ENCODE measurements at regions of chr19 and their contacts with region 1.

Region 1: GRCh38 chr19:45478454-45479238 is 10.8 kb downstream of the FOSB start:
- DNase-seq: peak; percentile 88
- ATAC-seq: peak; percentile 94
- H3K4me3 ChIP-seq: peak overlapping the region; percentile 72
- H3K27ac ChIP-seq: peak overlapping the region; percentile 98
- H3K4me1 ChIP-seq: peaks cover 5% of the 10 kb centered on the region
- H3K27me3 ChIP-seq: no peaks in the 10 kb centered on the region
- CTCF ChIP-seq: peak; percentile 94 to 98 (median 96)
- EP300 ChIP-seq: no peak
- POLR2A ChIP-seq: peak; percentile 74
- RAD21 ChIP-seq: peak; percentile 89

Region 2: DNA sequence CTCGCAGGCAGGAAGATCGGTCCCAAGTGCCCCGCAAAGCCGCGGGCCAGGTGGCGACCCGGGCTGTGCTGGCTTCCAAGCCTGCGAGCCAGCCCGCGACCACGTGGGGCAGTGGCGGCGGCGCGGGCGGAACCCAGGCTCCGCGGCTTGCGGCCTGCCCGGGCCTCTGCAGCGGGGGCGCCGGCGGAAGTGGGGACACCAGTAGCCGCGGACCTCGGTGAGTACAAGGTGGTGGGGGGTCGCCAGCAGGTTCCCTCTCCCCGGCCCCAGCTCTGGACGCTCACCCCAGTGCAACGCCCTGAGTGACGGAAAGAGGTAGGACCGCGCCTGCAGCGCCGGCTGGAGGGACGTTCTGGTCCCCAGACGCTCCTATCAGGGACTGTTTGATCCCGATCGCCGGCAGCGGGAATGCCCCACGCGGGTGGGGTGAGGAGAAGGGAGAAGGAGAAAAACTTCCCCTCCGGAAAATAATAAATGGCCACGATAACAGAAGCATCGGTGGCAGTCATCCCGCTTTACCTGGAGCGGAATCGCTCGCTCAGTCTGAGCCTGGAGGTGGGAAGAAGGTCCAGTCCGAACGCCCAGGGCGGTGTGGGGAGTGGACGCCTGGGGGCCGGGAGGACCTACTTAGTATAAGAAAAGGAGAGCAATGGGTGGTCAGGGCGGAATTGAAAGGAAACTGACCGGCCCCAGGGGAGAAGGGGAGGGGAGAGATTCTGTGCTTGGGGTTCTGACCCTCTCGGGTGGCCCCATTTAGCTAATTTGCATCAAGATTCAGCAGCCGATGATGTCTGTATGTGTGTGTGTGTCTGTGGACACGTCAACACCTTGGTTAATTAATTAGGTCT is 399.4 kb before region 1 on chr19 and contains the start of gene GEMIN7:
- CTCF ChIA-PET with region 1: no interaction called
- POLR2A ChIA-PET with region 1: no interaction called
- RAD21 ChIA-PET with region 1: no interaction called
- SMC1A ChIA-PET with region 1: no interaction called
- in situ Hi-C with region 1: no loop called
- intact Hi-C with region 1: loop called (anchors 10 kb)
- DNase-seq: peak; percentile 64
- ATAC-seq: peak; percentile 56
- H3K4me3 ChIP-seq: peak within 1 kb of the TSS; percentile 89
- H3K27ac ChIP-seq: peak within 1 kb of the TSS; percentile 95
- H3K4me1 ChIP-seq: peaks cover 22% of the 10 kb centered on the region
- H3K27me3 ChIP-seq: no peaks in the 10 kb centered on the region
- CTCF ChIP-seq: peak in 2 of 3 experiments; percentile 9 to 11; a peak in 1 of 6 replicates
- EP300 ChIP-seq: peak; percentile 65 to 80; a peak in 2 of 4 replicates
- POLR2A ChIP-seq: peak; percentile 83
- RAD21 ChIP-seq: no peak
- polyA plus RNA-seq, gene GEMIN7: 51.6 to 55.3 TPM

Region 3: DNA sequence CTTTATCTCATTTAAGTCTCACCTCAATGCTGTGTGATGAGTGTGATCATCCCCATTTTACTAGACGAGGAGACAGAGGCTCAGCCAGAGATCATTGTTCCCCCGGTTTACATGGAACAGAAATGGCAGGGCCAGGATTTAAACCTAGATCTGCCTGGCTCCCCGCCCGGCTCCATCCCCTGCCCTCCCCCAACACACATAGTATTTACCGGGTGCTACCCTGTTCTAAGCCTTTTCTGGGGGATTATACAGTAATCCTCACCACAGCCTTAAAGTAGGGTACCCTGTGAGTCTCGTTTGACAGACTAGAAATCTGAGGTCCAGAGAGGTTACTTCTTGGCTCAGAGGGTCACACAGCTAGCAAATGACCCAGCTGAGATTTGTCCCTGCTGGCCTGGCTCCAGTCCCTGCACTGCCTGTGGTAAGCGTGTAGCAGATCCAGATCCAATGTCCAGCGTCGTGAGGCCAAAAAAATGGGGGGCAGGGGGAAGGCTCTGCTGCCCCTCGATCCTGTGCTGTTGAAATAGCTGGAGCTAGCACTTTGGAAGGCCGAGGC is 141.9 kb before region 1 on chr19:
- CTCF ChIA-PET with region 1: no interaction called
- POLR2A ChIA-PET with region 1: interaction called, 3 read pairs
- RAD21 ChIA-PET with region 1: no interaction called
- SMC1A ChIA-PET with region 1: no interaction called
- in situ Hi-C with region 1: no loop called
- intact Hi-C with region 1: loop called (anchors 2 kb)
- DNase-seq: no peak
- ATAC-seq: no peak
- H3K4me3 ChIP-seq: no peak overlapping the region
- H3K27ac ChIP-seq: no peak overlapping the region
- H3K4me1 ChIP-seq: peaks cover 3% of the 10 kb centered on the region; the same call in 1 of the 2 replicates
- H3K27me3 ChIP-seq: 0 out of 4 replicates have a peak, but pooled peaks cover 0 to 1% of the 10 kb centered on the region in 2 experiments
- CTCF ChIP-seq: no peak
- EP300 ChIP-seq: no peak
- POLR2A ChIP-seq: no peak
- RAD21 ChIP-seq: no peak

Region 4: DNA sequence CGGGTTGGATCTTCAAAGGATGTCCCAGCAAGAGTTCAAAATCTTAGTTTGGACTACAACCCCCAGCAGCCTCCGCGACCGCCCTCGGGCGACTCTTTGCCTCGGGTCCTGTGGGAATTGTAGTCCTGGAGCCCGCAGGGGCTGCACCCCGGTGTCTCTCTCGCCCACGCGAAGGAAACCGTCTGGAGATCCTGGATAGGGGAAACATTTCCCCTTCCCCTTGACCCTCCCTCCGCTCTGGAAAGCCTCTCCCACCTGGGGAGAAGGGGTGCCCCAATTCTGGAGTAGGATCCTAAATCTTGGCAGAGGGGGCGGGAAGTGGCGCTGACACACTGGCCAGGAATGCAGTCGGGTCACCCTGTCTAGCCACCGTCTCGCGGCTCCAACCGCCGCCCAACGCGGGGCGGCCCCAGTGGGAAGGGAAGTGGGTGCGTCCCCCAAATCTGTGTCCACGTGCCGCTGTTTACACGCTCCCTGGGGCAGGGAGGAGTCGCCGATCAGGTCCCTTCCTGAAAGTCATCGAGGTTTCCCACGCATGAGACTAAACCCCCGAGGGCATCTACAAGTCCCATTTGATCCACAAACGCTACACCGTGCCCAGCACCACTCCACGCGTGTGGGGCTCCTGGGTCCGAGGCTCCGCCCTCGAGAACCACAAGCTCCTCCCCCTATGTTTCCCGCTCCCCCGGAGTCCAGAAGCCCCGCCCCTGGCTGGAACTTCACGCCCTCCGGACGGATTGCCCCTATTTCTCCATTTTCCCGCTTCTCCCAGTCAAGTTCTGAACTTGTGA is 73.0 kb before region 1 on chr19:
- CTCF ChIA-PET with region 1: interaction called, 93 read pairs
- POLR2A ChIA-PET with region 1: interaction called, 3 read pairs
- RAD21 ChIA-PET with region 1: interaction called, 48 read pairs
- SMC1A ChIA-PET with region 1: interaction called, 55 read pairs
- in situ Hi-C with region 1: no loop called
- intact Hi-C with region 1: loop called (anchors 1 kb)
- DNase-seq: peak; percentile 30
- ATAC-seq: peak; percentile 77
- H3K4me3 ChIP-seq: peak overlapping the region; percentile 98
- H3K27ac ChIP-seq: peak overlapping the region; percentile 89
- H3K4me1 ChIP-seq: peaks cover 4% of the 10 kb centered on the region
- H3K27me3 ChIP-seq: no peaks in the 10 kb centered on the region; a peak in 1 of 4 replicates
- CTCF ChIP-seq: no peak
- EP300 ChIP-seq: no peak
- POLR2A ChIP-seq: peak; percentile 45; the same call in 1 of the 2 replicates
- RAD21 ChIP-seq: no peak

Region 5: DNA sequence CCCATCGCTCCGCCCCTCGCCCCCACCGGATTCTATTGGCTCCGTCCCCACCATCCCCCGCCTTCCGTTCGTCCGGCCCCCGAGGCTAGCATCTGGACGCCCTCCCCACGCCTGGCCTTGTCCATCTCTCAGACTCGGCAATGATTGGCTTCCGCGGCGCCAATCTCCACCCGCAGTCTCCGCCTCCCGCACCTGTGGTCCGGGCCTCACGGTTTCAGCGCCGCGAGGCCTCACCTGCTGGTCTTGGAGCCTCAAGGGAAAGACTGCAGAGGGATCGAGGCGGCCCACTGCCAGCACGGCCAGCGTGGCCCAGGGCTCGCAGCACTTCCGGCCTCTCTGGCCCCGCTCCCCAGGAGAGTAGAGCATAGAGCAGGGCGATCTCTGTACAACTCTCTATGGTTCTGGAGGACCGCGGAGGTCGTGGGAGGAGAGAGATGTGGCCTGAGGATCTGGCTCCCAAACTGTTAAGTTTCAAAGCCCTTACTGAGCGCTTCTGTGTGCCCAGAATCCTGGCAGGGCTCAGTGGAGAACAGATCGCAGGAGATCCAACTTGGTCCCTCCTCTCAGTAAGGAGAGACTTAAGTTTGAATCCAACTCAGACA is 55.0 kb before region 1 on chr19 and contains the start of gene ERCC1:
- CTCF ChIA-PET with region 1: interaction called, 103 read pairs
- POLR2A ChIA-PET with region 1: interaction called, 8 read pairs
- RAD21 ChIA-PET with region 1: interaction called, 20 read pairs
- SMC1A ChIA-PET with region 1: interaction called, 18 read pairs
- in situ Hi-C with region 1: no loop called
- intact Hi-C with region 1: loop called (anchors 1 kb)
- DNase-seq: peak; percentile 89
- ATAC-seq: peak; percentile 83
- H3K4me3 ChIP-seq: peak within 1 kb of the TSS; percentile 82
- H3K27ac ChIP-seq: peak within 1 kb of the TSS; percentile 91
- H3K4me1 ChIP-seq: peaks cover 35% of the 10 kb centered on the region
- H3K27me3 ChIP-seq: no peaks in the 10 kb centered on the region
- CTCF ChIP-seq: no peak
- EP300 ChIP-seq: no peak
- POLR2A ChIP-seq: peak; percentile 93
- RAD21 ChIP-seq: no peak
- polyA plus RNA-seq, gene ERCC1: 14.7 to 36.8 TPM

Region 6: GRCh38 chr19:45446320-45446763 is 32.3 kb before region 1 on chr19:
- CTCF ChIA-PET with region 1: interaction called, 385 read pairs
- POLR2A ChIA-PET with region 1: interaction called, 9 read pairs
- RAD21 ChIA-PET with region 1: interaction called, 206 read pairs
- SMC1A ChIA-PET with region 1: interaction called, 145 read pairs
- in situ Hi-C with region 1: loop called (anchors 5 kb)
- intact Hi-C with region 1: no loop called
- DNase-seq: no peak
- ATAC-seq: no peak
- H3K4me3 ChIP-seq: no peak overlapping the region
- H3K27ac ChIP-seq: no peak overlapping the region
- H3K4me1 ChIP-seq: peaks cover 29% of the 10 kb centered on the region
- H3K27me3 ChIP-seq: no peaks in the 10 kb centered on the region
- CTCF ChIP-seq: peak; percentile 53 to 64 (median 60)
- EP300 ChIP-seq: no peak
- POLR2A ChIP-seq: no peak
- RAD21 ChIP-seq: no peak

Region 7: DNA sequence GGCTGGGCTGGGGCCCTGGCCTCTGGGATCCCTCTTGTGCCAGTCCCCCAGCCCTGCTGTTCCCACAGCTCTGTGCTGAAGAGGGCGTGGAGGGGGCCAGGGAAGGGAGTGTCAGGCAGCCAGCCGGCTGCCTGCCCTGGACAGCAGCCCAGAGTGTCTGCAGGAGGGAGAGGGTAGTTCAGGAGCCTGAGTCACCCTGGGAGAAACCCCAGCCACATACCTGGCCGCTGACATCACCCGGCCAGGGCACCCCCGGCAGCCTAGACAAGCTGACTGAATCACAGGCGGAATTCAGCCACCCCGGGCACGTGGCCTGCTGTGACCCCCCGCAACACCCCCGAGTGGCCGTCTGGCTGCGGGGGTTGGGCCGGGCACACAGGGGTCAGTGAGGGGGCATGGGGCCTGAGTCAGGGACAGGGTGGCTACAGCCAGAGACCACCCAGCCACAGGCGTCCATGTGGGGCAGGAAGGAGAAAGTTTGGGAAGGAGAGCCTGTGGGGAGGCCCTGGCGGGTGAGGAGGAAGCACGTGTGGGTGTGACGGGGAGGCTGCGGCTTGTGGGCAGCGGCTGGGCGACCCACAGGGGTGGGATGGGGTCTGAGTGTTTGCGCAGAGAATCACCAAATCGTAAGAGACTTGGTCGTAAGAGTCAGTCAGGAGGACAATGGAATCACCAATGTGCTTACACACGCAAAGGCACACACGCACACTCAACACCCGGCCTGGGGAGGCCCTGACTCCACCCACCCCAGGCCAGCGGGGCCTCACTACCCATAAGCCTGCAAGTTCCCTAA is 22.7 kb before region 1 on chr19:
- CTCF ChIA-PET with region 1: interaction called, 16 read pairs
- POLR2A ChIA-PET with region 1: interaction called, 5 read pairs
- RAD21 ChIA-PET with region 1: interaction called, 4 read pairs
- SMC1A ChIA-PET with region 1: interaction called, 4 read pairs
- in situ Hi-C with region 1: no loop called
- intact Hi-C with region 1: no loop called
- DNase-seq: no peak
- ATAC-seq: peak; percentile 86
- H3K4me3 ChIP-seq: no peak overlapping the region
- H3K27ac ChIP-seq: peak overlapping the region; percentile 33
- H3K4me1 ChIP-seq: peaks cover 33% of the 10 kb centered on the region
- H3K27me3 ChIP-seq: no peaks in the 10 kb centered on the region
- CTCF ChIP-seq: no peak
- EP300 ChIP-seq: no peak
- POLR2A ChIP-seq: no peak
- RAD21 ChIP-seq: no peak

Region 8: GRCh38 chr19:45615795-45616708 is 137.4 kb after region 1 on chr19:
- CTCF ChIA-PET with region 1: no interaction called
- POLR2A ChIA-PET with region 1: no interaction called
- RAD21 ChIA-PET with region 1: no interaction called
- SMC1A ChIA-PET with region 1: no interaction called
- in situ Hi-C with region 1: no loop called
- intact Hi-C with region 1: no loop called
- DNase-seq: peak; percentile 48
- ATAC-seq: peak; percentile 91
- H3K4me3 ChIP-seq: no peak overlapping the region
- H3K27ac ChIP-seq: no peak overlapping the region
- H3K4me1 ChIP-seq: peaks cover 18% of the 10 kb centered on the region
- H3K27me3 ChIP-seq: no peaks in the 10 kb centered on the region
- CTCF ChIP-seq: no peak
- EP300 ChIP-seq: no peak
- POLR2A ChIP-seq: 0 out of 2 replicates have a peak, but pooled peaks have one; percentile 29
- RAD21 ChIP-seq: no peak

Region 9: DNA sequence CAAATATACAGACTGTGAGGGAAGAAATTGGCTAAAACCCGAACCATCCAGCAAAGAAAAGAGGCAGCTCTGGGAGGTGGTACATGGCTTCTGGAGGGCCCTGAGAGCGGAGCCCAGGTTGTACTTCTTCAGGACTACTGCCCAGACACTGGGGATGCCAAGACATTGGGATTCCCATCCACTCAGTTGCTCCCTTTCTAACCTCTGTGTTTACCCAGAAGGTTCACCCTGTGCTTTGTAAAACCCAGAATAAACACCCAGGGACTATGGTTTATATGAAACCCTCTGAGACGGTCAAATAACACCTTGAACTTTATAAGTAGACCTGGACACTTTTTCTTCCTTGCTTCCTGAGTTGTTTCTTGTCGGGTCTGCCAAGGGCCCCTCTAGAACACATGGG is 264.3 kb after region 1 on chr19:
- CTCF ChIA-PET with region 1: no interaction called
- POLR2A ChIA-PET with region 1: no interaction called
- RAD21 ChIA-PET with region 1: no interaction called
- SMC1A ChIA-PET with region 1: no interaction called
- in situ Hi-C with region 1: no loop called
- intact Hi-C with region 1: no loop called
- DNase-seq: no peak
- ATAC-seq: no peak
- H3K4me3 ChIP-seq: no peak overlapping the region
- H3K27ac ChIP-seq: no peak overlapping the region
- H3K4me1 ChIP-seq: no peaks in the 10 kb centered on the region
- H3K27me3 ChIP-seq: peaks cover 0 to 2% of the 10 kb centered on the region in 2 experiments; a peak in 2 of 4 replicates
- CTCF ChIP-seq: no peak
- EP300 ChIP-seq: no peak
- POLR2A ChIP-seq: no peak
- RAD21 ChIP-seq: no peak